Dendritic cell treated with granulocyte-macrophage colony-stimulating factor and Interleukin-4, amounts not matched to agents 40 ng/mL and 50 ng/mL, for 4 days (primary cell): ENCODE measurements at regions of chr4 and their contacts with region 1.

Region 1: DNA sequence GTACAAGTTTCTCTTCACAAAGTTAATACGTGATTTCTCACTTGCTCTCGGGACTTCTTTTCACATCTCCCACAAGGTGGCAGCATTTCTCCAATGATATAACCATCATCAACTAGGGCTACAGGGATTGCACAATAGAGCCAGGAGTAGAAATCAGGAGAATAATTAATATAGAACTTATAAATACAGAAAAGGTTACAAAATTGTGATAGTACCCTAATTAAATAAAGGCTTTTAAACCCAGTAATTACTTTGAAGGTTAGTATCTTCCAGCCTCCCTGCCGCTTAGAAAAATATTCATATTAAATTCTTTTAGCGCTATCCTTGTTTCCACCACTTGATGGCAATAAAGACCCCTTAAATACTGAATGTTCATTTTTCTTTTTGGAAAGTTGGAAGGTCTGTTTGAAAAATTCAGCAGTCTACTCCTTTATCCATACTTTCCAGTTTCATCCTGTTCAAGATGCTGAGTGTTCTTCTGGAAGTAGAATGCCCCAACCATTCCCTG is 65.8 kb downstream of the RASGEF1B start:
- H3K4me3 Mint-ChIP-seq: no peak overlapping the region
- H3K27ac Mint-ChIP-seq: no peak overlapping the region
- H3K4me1 Mint-ChIP-seq: peaks cover 6% of the 10 kb centered on the region
- H3K27me3 Mint-ChIP-seq: peaks cover 2% of the 10 kb centered on the region

Region 2: DNA sequence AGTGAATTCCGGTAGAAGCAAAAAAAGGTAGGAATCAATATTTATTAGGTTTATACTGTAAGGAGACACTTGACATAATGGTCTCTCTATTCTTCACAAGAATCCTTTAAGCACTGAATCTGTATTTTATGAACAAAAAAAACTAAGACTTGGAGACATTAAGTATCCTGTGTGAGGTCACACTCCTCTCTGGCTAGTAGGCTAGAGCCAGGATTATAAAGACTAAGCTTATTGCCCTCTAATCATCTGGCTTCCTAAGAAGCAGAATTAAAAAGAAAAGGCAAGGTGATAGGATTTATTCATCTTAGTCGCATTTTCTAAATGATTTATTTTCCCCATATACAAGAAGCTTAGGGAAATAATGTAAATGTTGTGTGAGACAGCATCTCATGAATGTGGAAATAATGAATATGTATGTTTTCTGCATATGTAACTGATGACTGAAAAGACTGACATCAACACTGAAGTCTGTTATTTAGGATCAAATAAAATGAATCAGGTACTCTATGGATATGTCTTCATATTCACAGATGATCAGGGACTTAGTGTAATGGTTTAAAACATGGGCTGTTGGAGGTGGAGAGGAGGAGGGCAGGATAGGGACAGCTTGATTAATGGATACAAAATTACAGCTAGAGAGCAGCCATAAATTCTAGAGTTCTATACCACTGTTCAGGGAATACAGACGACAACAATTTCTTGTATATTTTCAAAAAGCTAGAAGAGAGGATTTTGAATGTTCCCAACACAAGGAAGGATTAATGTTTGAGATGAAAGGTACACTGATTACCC is 160.5 kb before region 1 on chr4:
- intact Hi-C with region 1: no loop called
- H3K4me3 Mint-ChIP-seq: no peak overlapping the region
- H3K27ac Mint-ChIP-seq: no peak overlapping the region
- H3K4me1 Mint-ChIP-seq: no peaks in the 10 kb centered on the region
- H3K27me3 Mint-ChIP-seq: no peaks in the 10 kb centered on the region

Region 3: DNA sequence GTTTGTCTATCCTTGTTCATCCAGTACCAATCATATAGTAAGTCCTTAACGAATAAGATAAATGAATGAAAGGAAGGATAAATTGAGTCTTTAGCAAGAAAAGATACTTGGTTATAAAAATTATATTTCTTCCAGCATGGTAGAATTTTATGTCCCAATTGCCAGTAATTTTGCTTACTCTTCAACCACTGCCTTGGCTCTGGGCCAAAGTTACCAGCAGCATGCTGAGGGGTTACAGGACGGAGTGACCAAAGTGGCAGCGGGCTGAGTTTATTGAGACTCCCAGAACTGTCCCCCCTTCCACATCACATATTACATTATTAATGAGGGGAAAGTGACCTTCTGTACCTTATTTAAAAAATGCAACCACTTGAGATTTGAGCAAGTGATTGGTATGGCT is 55.9 kb before region 1 on chr4:
- intact Hi-C with region 1: no loop called
- H3K4me3 Mint-ChIP-seq: no peak overlapping the region
- H3K27ac Mint-ChIP-seq: no peak overlapping the region
- H3K4me1 Mint-ChIP-seq: no peaks in the 10 kb centered on the region
- H3K27me3 Mint-ChIP-seq: no peaks in the 10 kb centered on the region

Region 4: GRCh38 chr4:81844717-81845116 is 438.8 kb after region 1 on chr4:
- intact Hi-C with region 1: loop called (anchors 1 kb)
- H3K4me3 Mint-ChIP-seq: no peak overlapping the region
- H3K27ac Mint-ChIP-seq: no peak overlapping the region
- H3K4me1 Mint-ChIP-seq: no peaks in the 10 kb centered on the region
- H3K27me3 Mint-ChIP-seq: no peaks in the 10 kb centered on the region

Region 5: DNA sequence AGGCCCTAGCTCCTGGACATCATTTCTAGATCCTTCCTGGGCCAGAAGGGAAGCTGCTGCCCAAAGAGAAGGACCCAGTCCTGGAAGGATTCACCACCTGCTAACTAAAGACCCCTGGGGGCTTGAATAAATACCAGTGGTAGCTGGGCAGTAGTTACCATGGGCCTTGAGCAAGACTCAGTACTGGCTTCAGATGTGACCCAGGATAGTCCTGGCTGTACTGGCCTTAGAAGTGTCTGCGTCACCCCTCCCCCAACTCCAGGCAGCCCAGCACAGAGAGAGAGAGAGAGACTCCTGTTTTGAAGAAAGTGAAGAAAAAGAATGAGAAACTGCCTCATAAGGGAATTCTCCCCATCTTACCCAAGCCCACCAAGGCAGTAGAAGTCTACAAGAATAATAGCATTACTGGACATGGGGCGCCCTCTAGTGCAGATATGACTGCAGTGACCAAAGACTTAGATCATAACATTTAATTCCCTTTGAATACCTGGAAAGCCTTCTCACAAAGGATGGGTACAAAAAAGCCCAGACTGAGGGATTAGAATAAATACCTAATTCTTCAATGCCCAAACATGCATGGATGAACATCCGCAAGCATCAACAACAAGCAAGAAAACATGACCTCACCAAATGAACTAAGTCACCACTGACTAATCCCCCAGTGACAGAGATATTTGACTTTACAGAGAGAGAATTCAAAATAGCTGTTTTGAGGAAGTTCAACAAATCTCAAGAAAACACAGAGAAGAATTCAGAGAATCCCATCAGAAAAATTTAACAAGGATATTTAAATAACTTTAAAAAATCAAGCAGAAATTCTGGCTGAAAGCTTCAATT is 796.1 kb after region 1 on chr4:
- intact Hi-C with region 1: loop called (anchors 1 kb)
- H3K4me3 Mint-ChIP-seq: no peak overlapping the region
- H3K27ac Mint-ChIP-seq: no peak overlapping the region
- H3K4me1 Mint-ChIP-seq: peaks cover 10% of the 10 kb centered on the region
- H3K27me3 Mint-ChIP-seq: no peaks in the 10 kb centered on the region

Region 6: DNA sequence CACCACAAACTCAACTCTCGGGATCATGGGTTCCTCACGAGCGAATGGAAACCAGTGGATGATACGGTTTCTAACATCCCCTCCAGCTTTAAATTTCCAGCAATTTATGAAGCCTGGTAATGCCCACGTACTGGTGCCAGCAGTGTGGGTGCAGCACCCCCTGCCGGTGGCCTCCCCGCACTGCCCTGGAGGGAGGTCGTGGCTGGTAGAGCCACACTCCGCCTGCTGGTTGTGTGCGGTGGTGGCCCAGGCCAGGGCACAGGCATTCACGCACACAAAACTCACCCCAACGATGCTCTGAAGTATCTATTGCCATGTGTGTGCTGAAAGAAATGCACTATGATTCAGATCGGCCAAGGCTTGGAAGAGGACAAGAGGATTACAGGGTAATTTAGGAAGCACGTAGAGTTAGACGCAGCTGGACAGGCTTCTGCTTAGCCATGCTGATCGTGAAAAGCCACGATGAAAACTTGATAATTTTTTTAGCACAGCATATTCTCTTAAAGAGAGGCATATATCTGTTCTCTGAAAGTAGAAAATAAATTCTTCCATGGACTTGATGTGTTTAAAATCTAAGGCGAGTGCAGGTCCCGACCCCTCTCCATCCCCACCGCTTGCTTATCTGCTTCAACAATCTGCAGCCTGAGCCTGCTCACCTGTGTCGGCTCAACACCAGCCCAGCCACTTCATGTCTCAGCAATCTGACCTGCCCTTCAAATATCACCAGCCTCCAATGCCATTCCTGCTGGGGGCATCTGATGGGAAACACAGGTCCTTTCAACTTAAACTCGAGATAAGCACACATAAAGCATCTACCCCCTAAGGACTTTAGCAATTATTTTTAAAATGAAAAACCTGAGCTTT is 1333.6 kb after region 1 on chr4:
- intact Hi-C with region 1: loop called (anchors 5 kb)
- H3K4me3 Mint-ChIP-seq: no peak overlapping the region
- H3K27ac Mint-ChIP-seq: no peak overlapping the region
- H3K4me1 Mint-ChIP-seq: peaks cover 5% of the 10 kb centered on the region
- H3K27me3 Mint-ChIP-seq: no peaks in the 10 kb centered on the region